Cardiac septum (tissue), 1 donor: ENCODE measurements at regions of chr2 and their contacts with region 1.

Region 1: GRCh38 chr2:58762176-58762781 is 521.2 kb upstream of the FANCL start:
- DNase-seq: no peak

Region 2: DNA sequence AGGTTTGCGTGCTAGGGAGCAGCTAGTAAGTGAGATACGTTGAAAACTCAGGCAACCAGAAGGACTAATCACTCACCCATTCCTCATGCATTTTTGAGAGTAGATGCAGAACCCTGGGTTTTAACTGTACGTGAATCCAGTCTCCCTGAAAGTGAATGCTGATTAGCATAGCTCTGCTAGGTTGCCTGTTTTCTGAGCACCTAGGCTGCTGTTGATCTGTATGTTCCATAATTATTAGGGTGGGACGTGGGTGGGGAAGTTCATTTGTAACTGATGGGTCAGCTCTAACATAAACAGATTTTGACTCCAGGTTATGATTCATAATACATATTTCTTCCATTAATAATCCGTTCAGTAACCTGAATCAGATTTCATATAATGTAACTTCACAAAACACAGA is 142.2 kb before region 1 on chr2:
- intact Hi-C with region 1: no loop called
- DNase-seq: no peak

Region 3: GRCh38 chr2:59182249-59182648 is 420.0 kb after region 1 on chr2:
- intact Hi-C with region 1: loop called (anchors 5 kb)
- DNase-seq: no peak

Region 4: DNA sequence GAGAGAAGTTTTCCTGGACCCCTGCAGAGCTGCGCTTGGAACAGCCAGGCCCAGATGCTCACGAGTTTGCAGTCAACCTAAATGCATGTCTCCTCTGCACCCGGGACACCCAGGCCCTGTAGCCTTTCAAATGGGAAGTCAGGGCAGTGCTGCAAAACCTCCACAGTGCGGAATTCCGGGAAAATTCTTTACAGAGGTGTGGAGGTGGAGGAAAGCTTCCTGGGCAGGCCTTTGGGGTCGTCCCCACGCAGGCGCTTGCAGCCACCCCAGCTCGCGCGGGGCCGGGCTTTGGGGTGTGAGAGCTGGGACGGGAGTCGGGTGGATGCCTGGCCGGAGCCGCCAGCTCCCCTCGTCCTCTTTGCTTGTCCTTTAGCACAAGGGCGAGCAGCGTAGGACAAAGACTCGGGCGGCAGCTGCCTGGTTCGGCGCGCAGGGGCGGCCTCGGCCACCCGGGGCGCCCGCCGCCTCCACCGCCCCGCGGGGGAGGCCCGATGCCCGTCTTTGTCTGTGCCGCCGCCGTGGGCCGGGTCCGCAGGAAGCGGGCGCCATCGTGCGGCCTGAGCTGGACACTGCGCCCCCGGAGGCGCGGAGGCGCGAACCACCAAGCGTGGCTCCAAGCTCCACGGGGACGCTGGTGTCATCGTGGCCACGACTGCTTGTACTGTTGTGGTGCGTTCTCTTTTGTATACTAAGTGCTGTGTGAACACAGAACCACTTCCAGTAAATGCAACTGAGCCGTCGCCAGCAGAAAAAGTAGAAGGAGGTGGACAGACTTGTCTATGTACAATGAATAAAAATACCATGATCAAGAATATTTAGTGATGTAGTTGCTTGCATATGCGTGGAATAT is 1819.4 kb after region 1 on chr2:
- intact Hi-C with region 1: loop called (anchors 10 kb)
- DNase-seq: peak; percentile 87